ENCODE measurements at regions of chr15 and their contacts with region 1.

Region 1: DNA sequence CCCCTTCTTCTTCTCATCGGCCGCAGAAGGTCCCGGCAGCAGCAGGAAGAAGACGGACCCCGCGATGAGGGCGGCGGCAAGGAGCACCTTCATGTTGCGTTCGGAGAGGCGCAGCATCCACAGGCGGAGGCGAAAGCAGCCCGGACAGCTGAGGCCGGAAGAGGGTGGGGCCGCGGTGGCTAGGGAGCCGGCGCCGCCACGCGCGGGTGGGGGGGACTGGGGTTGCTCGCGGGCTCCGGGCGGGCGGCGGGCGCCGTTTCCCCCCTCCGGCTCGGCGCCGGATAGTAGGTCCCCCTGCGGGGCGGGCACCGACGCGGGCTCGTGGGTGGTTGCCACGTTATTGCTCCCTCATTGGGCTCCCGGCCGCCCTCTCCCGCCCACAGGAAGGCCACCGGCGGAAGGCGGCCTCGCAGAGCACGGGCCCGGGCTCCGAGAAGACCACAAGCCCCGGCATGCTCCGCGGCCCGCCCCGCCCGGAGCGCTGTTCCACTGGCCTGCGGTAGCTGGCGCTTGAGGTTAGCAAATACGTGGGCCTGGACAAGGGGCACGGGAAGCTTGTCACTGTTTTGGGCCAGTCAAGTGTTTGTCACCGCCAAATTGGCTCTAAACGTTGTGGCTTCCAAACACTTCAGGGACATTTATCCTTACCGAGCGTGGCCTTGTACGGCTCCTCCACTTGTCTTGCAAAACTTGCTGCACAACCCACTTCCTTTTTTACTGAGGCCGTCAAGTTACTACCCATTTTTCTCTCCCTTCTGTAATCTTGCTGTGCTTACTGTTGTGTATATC is at the start of gene PPIB:
- DNase-seq: peak; percentile 96 to 98 (median 97)
- H3K4me3 ChIP-seq: peak within 1 kb of the TSS; percentile 68 to 71
- H3K4me3 Mint-ChIP-seq: peak within 1 kb of the TSS; percentile 81 to 95 (median 90)
- H3K27ac ChIP-seq: peak within 1 kb of the TSS; percentile 80
- H3K27ac Mint-ChIP-seq: peak within 1 kb of the TSS; percentile 85 to 98 (median 96)
- H3K4me1 ChIP-seq: peaks cover 54% of the 10 kb centered on the region
- H3K4me1 Mint-ChIP-seq: peaks cover 28 to 53% (median 40%) of the 10 kb centered on the region in 4 donors
- H3K27me3 ChIP-seq: no peaks in the 10 kb centered on the region
- H3K27me3 Mint-ChIP-seq: no peaks in the 10 kb centered on the region
- total RNA-seq, gene PPIB: 247 to 271 TPM

Region 2: GRCh38 chr15:64093627-64094417 is 69.2 kb before region 1 on chr15 and contains the start of gene CIAO2A:
- CTCF ChIA-PET with region 1: interaction called, 3 read pairs
- POLR2A ChIA-PET with region 1: interaction called, 42 read pairs
- intact Hi-C with region 1: loop called (anchors 1 kb)
- DNase-seq: peak; percentile 86 to 96 (median 90)
- H3K4me3 ChIP-seq: peak within 1 kb of the TSS; percentile 87 to 98
- H3K4me3 Mint-ChIP-seq: peak within 1 kb of the TSS; percentile 92 to 99 (median 98)
- H3K27ac ChIP-seq: peak within 1 kb of the TSS; percentile 85
- H3K27ac Mint-ChIP-seq: peak within 1 kb of the TSS; percentile 90 to 100 (median 98)
- H3K4me1 ChIP-seq: peaks cover 65% of the 10 kb centered on the region
- H3K4me1 Mint-ChIP-seq: peaks cover 55 to 86% (median 69%) of the 10 kb centered on the region in 4 donors
- H3K27me3 ChIP-seq: no peaks in the 10 kb centered on the region
- H3K27me3 Mint-ChIP-seq: no peaks in the 10 kb centered on the region
- total RNA-seq, gene CIAO2A: 35.0 to 36.4 TPM

Region 3: GRCh38 chr15:64355944-64356709 is 193.1 kb after region 1 on chr15 and contains the start of gene CSNK1G1:
- CTCF ChIA-PET with region 1: interaction called, 5 read pairs
- POLR2A ChIA-PET with region 1: interaction called, 8 read pairs
- intact Hi-C with region 1: loop called (anchors 1 kb)
- DNase-seq: peak; percentile 89 to 94 (median 90)
- H3K4me3 ChIP-seq: peak within 1 kb of the TSS; percentile 76 to 95
- H3K4me3 Mint-ChIP-seq: peak within 1 kb of the TSS; percentile 89 to 99 (median 96)
- H3K27ac ChIP-seq: peak within 1 kb of the TSS; percentile 67
- H3K27ac Mint-ChIP-seq: peak within 1 kb of the TSS; percentile 92 to 97 (median 94)
- H3K4me1 ChIP-seq: peaks cover 21% of the 10 kb centered on the region
- H3K4me1 Mint-ChIP-seq: peaks cover 13 to 25% (median 19%) of the 10 kb centered on the region in 4 donors
- H3K27me3 ChIP-seq: no peaks in the 10 kb centered on the region
- H3K27me3 Mint-ChIP-seq: no peaks in the 10 kb centered on the region
- total RNA-seq, gene CSNK1G1: 27.3 to 27.7 TPM

Region 4: DNA sequence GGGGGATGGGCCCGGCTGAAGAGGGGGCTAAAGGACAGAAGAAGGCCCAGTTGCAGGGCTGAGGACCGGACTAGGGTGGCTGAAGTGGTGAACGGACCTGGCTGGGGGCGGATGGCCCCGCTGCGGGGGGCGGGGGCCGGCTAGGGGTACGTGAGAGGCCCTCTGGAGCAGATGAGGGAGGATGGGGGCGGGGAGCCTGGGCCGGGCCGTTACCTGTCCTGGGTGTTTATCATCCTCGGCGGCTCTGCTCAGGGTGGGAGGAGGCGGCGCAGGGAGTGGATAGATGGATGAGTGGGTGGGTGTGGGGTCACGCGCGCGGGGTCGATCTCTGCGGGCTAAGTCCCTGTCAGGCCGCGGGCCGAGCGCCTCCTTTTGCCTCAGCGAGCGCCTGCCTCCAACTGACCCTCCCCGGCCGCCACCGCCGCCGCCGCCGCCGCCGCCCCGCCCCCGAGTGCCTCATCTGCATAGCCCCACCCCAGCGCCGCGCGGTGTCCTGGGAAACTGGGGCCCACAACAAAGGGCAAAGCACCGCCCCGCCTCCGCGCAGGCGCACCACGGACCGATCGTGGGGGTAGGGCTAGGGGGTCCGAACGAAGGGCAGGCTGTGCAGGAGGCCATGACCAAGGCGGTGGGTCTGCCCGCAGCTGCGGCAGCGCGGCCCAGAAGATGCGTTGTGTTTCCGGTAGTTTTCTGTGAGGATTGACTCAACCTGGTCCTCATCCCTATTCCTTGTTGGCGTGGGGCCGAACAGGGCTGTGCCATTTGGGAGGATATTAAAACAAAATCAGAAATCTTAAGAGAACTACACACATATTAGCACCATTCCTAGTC is 540.0 kb after region 1 on chr15:
- CTCF ChIA-PET with region 1: no interaction called
- POLR2A ChIA-PET with region 1: interaction called, 3 read pairs
- intact Hi-C with region 1: loop called (anchors 1 kb)
- DNase-seq: peak; percentile 91 to 94 (median 91)
- H3K4me3 ChIP-seq: peak overlapping the region; percentile 54 to 84
- H3K4me3 Mint-ChIP-seq: peak overlapping the region; percentile 79 to 95 (median 92)
- H3K27ac ChIP-seq: peak overlapping the region; percentile 73
- H3K27ac Mint-ChIP-seq: peak overlapping the region; percentile 44 to 95 (median 92)
- H3K4me1 ChIP-seq: peaks cover 52% of the 10 kb centered on the region
- H3K4me1 Mint-ChIP-seq: peaks cover 45 to 59% (median 52%) of the 10 kb centered on the region in 4 donors
- H3K27me3 ChIP-seq: no peaks in the 10 kb centered on the region
- H3K27me3 Mint-ChIP-seq: no peaks in the 10 kb centered on the region

Region 5: DNA sequence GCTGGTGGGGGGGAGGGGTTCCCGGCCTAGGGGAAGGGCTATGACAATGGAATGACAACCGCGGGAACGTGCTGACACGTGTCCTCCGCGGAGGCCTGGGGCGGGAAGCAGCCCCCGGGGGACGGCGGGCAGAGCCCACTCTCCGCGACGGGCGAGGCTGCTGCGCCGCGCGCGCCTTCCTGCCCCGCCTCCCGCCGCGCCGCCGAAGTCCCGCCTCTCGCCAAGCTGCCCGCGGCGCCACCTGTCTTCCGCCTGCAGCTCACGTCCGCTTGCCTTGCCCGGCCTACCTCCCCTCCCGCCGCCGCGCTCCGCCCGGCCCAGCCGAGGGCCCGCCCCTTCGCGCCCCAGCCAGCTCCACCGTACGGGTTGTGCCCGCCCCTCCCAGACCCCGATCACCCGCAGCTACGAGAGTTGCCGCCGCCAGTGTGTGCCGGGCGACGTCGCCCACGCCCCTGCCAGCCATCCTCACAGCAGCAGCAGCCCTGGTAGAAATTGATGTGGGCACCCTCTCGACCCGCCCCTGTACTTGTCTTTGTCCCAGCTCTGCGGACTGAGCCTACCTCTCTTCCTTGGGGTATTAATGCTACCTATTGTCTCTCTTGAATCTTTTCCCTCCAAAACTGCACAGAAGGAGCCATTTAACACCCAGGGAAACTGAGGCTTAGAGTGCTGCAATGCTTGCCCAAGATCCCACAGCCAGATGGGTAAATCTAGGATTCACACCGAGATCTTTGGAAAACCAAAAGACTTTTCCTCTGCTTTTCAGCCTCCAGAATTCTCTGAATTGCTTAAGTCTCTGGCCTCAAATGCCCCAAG is 1123.8 kb after region 1 on chr15 and contains the start of gene PARP16:
- CTCF ChIA-PET with region 1: no interaction called
- POLR2A ChIA-PET with region 1: interaction called, 3 read pairs
- intact Hi-C with region 1: loop called (anchors 5 kb)
- DNase-seq: peak; percentile 89 to 92 (median 90)
- H3K4me3 ChIP-seq: peak within 1 kb of the TSS; percentile 68 to 78
- H3K4me3 Mint-ChIP-seq: peak within 1 kb of the TSS; percentile 87 to 92 (median 90)
- H3K27ac ChIP-seq: peak within 1 kb of the TSS; percentile 86
- H3K27ac Mint-ChIP-seq: peak within 1 kb of the TSS; percentile 80 to 97 (median 95)
- H3K4me1 ChIP-seq: peaks cover 29% of the 10 kb centered on the region
- H3K4me1 Mint-ChIP-seq: peaks cover 28 to 43% (median 34%) of the 10 kb centered on the region in 4 donors
- H3K27me3 ChIP-seq: no peaks in the 10 kb centered on the region
- H3K27me3 Mint-ChIP-seq: no peaks in the 10 kb centered on the region
- total RNA-seq, gene PARP16: 20.8 to 21.4 TPM